ENCODE measurements at regions of chr3 and their contacts with region 1.

Region 1: GRCh38 chr3:186361762-186362536 is at the start of gene DGKG:
- DNase-seq: peak; percentile 64
- ATAC-seq: peak; percentile 90
- H3K4me3 Mint-ChIP-seq: peak within 1 kb of the TSS; percentile 83
- H3K27ac Mint-ChIP-seq: peak within 1 kb of the TSS; percentile 38
- H3K4me1 Mint-ChIP-seq: peaks cover 28% of the 10 kb centered on the region
- H3K27me3 Mint-ChIP-seq: peaks cover 7% of the 10 kb centered on the region
- CTCF ChIP-seq: no peak
- total RNA-seq, gene DGKG: 3.9 and 4.2 TPM in 2 replicates

Region 2: DNA sequence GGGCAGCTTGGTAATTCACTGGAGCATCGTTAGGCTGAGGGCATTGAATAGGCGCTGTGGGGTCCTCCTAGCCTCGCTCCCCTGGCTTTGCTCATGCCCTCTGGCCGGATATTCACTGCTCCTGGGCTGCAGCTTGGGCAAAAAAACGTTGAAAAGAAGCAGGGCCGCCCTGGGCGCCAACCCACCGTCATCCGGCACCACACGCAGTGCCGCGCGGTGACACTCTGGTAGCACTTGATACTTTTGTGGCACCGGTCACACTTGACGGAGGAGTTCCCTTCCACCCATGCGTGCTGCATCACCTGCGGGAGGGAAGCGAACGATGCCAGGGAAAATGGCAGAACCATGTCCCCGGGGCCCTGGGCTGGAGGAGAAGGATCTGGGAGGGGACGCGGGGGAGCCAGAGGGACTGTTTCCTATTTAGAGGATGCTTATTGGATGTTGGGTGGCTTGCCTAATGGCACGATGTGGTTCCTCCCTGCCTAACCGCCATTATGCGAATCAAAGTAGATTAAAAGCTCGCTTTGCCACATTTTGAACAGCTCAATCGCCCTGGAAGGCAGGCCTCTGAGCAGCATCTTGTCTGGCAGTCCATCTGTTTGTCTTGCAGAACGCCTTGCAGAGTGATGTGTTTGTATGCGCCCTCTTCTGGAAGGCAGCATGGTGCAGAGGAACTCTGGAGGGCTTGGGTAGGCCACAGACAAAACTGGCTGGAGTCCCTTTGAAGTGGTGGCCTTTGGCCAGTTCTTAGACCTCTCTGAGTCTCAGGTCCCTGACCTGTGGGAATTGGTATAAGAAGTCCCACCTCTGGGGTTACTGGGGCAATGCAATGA is 93.1 kb before region 1 on chr3:
- CTCF ChIA-PET with region 1: no interaction called
- POLR2A ChIA-PET with region 1: no interaction called
- intact Hi-C with region 1: no loop called
- DNase-seq: no peak
- ATAC-seq: no peak
- H3K4me3 Mint-ChIP-seq: no peak overlapping the region
- H3K27ac Mint-ChIP-seq: no peak overlapping the region
- H3K4me1 Mint-ChIP-seq: no peaks in the 10 kb centered on the region
- H3K27me3 Mint-ChIP-seq: no peaks in the 10 kb centered on the region
- CTCF ChIP-seq: no peak

Region 3: GRCh38 chr3:186281176-186281575 is 80.8 kb before region 1 on chr3:
- CTCF ChIA-PET with region 1: no interaction called
- POLR2A ChIA-PET with region 1: no interaction called
- intact Hi-C with region 1: no loop called
- DNase-seq: no peak
- ATAC-seq: no peak
- H3K4me3 Mint-ChIP-seq: no peak overlapping the region
- H3K27ac Mint-ChIP-seq: no peak overlapping the region
- H3K4me1 Mint-ChIP-seq: peaks cover 14% of the 10 kb centered on the region
- H3K27me3 Mint-ChIP-seq: no peaks in the 10 kb centered on the region
- CTCF ChIP-seq: no peak

Region 4: GRCh38 chr3:186327912-186328487 is 33.9 kb before region 1 on chr3:
- CTCF ChIA-PET with region 1: no interaction called
- POLR2A ChIA-PET with region 1: interaction called, 3 read pairs
- intact Hi-C with region 1: loop called (anchors 5 kb)
- DNase-seq: no peak
- ATAC-seq: no peak
- H3K4me3 Mint-ChIP-seq: no peak overlapping the region
- H3K27ac Mint-ChIP-seq: no peak overlapping the region
- H3K4me1 Mint-ChIP-seq: peaks cover 21% of the 10 kb centered on the region
- H3K27me3 Mint-ChIP-seq: no peaks in the 10 kb centered on the region
- CTCF ChIP-seq: no peak